ENCODE measurements at regions of chr16 and their contacts with region 1.

Region 1: DNA sequence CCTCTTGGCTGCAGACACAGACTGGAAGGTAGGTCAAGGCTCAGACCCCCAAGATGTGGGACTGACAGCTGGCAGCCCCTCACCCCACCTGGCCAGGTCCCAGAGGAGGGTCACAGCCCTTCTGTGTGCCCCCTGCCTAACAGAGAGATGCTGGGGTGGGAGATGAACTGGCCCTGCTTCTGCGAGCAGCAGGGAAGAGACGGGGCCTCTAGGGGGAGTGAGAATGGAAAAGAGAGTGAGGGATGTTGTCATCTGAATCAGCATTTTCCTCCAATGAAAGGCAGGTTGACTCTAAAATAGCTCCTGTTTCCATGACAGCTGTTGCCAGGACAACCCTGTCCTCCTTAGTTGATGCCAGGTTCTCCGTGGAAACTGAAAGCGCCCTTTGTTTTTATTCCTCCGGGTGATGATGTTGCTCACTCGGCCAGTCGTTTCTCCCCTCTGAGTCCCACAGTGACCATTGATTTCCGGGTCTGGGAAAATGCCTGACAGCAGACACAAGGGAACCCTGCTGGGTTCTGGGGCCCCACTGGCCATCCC is 4.9 kb upstream of the NDRG4 start:
- DNase-seq: peak; percentile 92
- CTCF ChIP-seq: no peak

Region 2: DNA sequence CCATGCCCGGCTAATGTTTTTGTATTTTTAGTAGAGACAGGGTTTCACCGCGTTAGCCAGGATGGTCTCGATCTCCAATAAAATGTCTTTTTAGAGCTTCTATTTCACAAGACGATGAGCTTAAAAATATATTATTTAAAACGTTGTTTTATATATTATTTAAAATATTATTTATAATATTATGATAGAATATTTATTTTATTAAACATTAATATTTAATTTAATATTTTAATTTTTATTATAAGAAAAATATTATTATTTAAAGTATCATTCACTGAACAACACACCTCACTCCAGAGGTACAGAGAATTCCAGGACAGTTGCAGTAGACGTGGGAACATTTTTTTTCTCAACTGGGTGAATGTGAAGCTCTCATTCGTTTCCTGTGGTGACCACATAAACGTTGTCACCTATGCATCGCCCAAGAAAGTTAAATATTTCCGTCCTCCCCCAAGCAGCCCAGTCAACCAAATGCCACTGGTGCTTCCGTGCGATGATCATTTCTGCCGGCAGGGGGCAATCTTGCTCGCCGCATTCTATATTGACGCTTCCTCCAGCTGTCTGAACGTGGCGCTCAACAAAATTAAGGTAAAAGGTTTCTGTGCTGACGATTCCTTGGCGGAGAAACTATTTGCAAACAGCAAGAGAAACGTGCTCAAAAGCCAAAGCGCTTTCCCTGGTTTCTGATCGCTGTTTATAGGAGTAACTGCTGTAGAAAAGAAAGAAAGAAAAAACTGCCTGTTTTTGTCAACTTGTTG is 158.5 kb before region 1 on chr16:
- in situ Hi-C with region 1: loop called (anchors 5 kb)
- DNase-seq: peak; percentile 83
- CTCF ChIP-seq: peak; percentile 81

Region 3: DNA sequence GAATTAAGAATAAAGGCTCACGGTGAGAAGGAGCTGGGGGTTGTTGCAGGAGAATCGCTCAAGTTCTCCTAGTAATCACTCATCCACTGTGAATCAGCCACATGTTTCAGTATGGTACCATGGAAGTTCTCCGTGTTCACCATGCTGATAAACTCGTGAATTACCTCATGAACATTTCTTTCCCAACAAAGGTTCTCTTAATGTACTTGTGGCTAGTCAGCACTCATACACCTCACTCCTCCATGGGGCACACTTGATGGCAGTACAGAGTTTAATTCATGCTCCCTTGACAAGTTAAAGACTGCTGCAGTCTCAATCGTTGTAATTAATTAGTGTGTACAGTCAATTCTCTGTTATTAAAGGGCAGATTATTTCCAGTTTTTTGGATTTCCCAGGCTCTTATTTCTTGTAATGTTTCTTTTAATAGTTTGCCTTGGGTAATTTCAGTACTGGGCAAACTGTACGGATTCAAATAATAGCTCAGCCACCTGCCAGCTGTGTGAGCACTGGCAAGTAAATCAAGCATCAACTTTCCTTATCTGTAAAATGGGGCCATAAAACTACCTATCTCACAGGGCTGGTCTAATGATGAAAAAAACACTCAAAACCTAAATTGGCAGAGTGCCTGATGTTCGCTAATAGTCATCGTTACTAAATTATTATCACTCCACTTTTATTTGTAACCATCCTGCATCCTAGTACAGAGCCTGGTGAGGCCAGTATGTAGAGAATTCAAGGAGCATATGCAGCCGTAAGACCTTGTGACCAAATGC is 232.9 kb after region 1 on chr16:
- in situ Hi-C with region 1: no loop called
- DNase-seq: no peak
- CTCF ChIP-seq: no peak

Region 4: DNA sequence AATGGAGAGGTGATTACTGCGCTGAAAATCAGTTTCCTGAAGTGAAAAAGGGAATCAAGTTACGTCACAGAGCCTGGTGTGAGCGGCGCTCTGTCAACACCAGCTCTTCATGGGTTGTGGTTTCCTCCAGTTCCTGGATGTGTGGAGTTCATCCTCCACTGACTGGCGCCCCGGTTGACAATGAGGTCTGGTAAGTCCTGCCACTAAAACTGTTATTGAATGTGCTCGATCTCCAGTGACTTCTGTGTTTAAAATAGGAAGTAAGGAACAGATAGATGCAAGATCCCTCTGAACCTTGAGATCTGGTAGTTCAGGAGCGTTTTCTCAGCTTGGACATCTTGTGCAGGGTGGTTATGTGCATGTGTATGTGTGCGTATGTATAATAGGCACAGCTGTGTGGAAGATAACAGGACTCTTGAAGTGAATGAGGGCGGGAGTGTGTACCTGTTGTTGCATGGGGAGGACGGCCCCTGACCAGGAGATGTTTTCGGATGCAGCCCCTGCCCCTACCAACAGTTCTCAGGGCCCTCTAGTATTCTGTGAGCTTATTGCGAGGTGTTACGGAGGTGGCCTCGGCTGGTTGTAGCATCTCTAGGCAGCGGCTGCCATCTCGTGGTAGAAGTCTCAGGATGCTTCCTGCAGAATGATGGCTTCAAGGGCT is 261.1 kb after region 1 on chr16:
- in situ Hi-C with region 1: loop called (anchors 10 kb)
- DNase-seq: peak; percentile 73
- CTCF ChIP-seq: peak; percentile 78